Naive thymus-derived CD4-positive, alpha-beta T cell (primary cell): ENCODE measurements at regions of chr11 and their contacts with region 1.

Region 1: GRCh38 chr11:35138943-35139721 is at the start of gene CD44:
- DNase-seq: peak; percentile 65 to 87 (median 73)
- ATAC-seq: peak; percentile 90
- H3K4me3 ChIP-seq: peak within 1 kb of the TSS; percentile 97
- H3K4me3 Mint-ChIP-seq: peak within 1 kb of the TSS; percentile 90 to 100 (median 96)
- H3K27ac ChIP-seq: peak within 1 kb of the TSS; percentile 88
- H3K27ac Mint-ChIP-seq: peak within 1 kb of the TSS; percentile 79 to 100 (median 95)
- H3K4me1 ChIP-seq: peaks cover 33 to 37% of the 10 kb centered on the region in 2 donors
- H3K4me1 Mint-ChIP-seq: peaks cover 43 to 60% (median 50%) of the 10 kb centered on the region in 7 donors
- H3K27me3 ChIP-seq: no peaks in the 10 kb centered on the region
- H3K27me3 Mint-ChIP-seq: peaks cover 0 to 8% (median 0%) of the 10 kb centered on the region in 5 donors
- total RNA-seq, gene CD44: 369 to 1,223 (median 784) TPM

Region 2: DNA sequence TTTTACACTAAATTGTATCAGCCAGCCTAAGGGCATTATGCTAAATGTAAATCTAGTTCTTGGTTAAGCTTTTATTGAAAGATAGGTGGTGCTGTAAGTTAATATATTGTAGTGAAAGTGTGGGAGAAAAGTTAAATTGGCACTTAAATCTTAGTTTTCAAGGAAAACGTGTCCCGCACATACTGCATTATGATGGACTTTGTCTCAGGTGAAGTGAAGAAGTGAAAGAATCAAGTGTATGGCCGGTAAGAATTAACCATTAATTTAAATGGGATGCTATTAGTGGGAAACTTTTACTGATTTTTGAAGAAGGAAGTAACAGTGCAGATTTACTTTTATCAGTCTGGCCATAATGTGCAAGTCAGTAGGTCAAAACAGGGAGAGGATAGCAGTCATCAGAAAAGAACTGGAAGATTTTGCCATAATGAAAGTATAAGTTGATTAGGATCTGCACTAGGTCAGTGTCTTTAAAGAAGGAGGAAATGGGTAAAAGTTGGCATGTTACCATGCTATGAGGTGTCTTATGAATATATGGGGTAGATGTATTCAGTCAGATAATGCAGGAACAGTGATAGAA is 141.1 kb before region 1 on chr11:
- CTCF ChIA-PET with region 1: interaction called, 33 read pairs
- POLR2A ChIA-PET with region 1: interaction called, 8 read pairs
- intact Hi-C with region 1: loop called in 1 of 2 experiments (anchors 1 kb)
- DNase-seq: peak in 6 of 9 donors; percentile 27 to 54 (median 44)
- ATAC-seq: peak; percentile 72
- H3K4me3 ChIP-seq: no peak overlapping the region
- H3K4me3 Mint-ChIP-seq: peak overlapping the region in 9 of 10 donors; percentile 6 to 81 (median 34)
- H3K27ac ChIP-seq: peak overlapping the region; percentile 8
- H3K27ac Mint-ChIP-seq: peak overlapping the region; percentile 15 to 90 (median 69)
- H3K4me1 ChIP-seq: peaks cover 15 to 19% of the 10 kb centered on the region in 2 donors
- H3K4me1 Mint-ChIP-seq: peaks cover 19 to 38% (median 35%) of the 10 kb centered on the region in 7 donors
- H3K27me3 ChIP-seq: no peaks in the 10 kb centered on the region
- H3K27me3 Mint-ChIP-seq: no peaks in the 10 kb centered on the region

Region 3: GRCh38 chr11:35040221-35040942 is 98.8 kb before region 1 on chr11:
- CTCF ChIA-PET with region 1: interaction called, 7 read pairs
- POLR2A ChIA-PET with region 1: interaction called, 75 read pairs
- intact Hi-C with region 1: loop called (anchors 1 kb)
- DNase-seq: peak in 8 of 9 donors; percentile 53 to 89 (median 74)
- ATAC-seq: peak; percentile 88
- H3K4me3 ChIP-seq: peak overlapping the region; percentile 60
- H3K4me3 Mint-ChIP-seq: peak overlapping the region; percentile 74 to 94 (median 89)
- H3K27ac ChIP-seq: peak overlapping the region; percentile 86
- H3K27ac Mint-ChIP-seq: peak overlapping the region; percentile 90 to 99 (median 97)
- H3K4me1 ChIP-seq: peaks cover 29 to 45% of the 10 kb centered on the region in 2 donors
- H3K4me1 Mint-ChIP-seq: peaks cover 28 to 77% (median 68%) of the 10 kb centered on the region in 7 donors
- H3K27me3 ChIP-seq: no peaks in the 10 kb centered on the region
- H3K27me3 Mint-ChIP-seq: peaks cover 0 to 29% (median 0%) of the 10 kb centered on the region in 5 donors

Region 4: DNA sequence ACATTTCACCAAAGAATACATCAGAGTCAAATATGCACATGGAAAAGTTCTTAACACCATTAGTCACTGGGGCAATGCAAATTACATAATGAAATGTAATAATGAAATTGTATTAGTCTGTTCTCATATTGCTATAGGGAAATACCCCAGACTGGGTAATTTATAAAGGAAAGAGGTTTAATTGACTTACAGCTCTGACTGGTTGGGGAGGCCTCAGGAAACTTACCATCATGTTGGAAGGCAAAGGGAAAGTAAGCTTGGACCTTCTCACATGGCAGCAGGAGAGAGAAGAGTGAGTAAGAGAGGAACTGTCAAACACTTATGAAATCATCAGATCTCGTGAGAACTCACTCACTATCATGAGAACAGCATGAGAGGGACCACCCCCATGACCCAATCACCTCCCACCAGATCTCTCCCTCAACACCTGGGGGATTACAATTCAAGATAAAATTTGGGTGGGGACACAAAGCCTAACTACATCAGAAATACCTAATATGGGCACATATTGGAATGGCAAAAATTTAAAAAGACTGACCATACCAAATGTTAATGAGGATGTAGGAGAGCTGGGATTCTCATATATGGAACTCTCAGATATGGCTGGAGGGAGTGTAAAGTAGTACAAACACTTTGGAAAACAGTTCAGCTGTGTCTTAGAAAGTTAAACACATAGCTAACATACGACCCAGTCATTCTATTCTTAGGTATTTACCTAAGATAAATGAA is 65.3 kb before region 1 on chr11:
- CTCF ChIA-PET with region 1: no interaction called
- POLR2A ChIA-PET with region 1: interaction called, 23 read pairs
- intact Hi-C with region 1: loop called in 1 of 2 experiments (anchors 1 kb)
- DNase-seq: no peak
- ATAC-seq: no peak
- H3K4me3 ChIP-seq: no peak overlapping the region
- H3K4me3 Mint-ChIP-seq: no peak overlapping the region
- H3K27ac ChIP-seq: no peak overlapping the region
- H3K27ac Mint-ChIP-seq: peak overlapping the region in 7 of 9 donors; percentile 48 to 82 (median 65)
- H3K4me1 ChIP-seq: peaks cover 33 to 44% of the 10 kb centered on the region in 2 donors
- H3K4me1 Mint-ChIP-seq: peaks cover 40 to 82% (median 66%) of the 10 kb centered on the region in 7 donors
- H3K27me3 ChIP-seq: no peaks in the 10 kb centered on the region
- H3K27me3 Mint-ChIP-seq: no peaks in the 10 kb centered on the region

Region 5: DNA sequence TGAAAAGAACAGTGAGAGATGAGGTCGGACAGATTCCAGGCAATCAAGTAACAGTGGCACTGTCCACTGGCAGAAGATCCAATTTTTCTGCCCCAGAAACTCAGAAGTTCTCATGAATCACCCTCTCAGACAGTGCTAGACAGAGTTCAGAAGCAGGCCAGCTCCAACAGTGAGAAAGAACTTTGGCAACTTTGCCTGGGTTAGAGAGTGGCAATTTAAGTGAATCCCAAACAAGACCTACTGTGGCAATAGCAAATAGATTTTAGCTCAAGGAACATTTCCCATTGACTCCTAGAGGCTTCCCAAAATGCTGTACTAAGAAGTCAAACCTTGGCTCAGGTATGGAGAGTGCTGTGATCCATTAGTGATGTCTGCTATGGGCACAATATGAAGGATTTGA is 12.1 kb after region 1 on chr11:
- CTCF ChIA-PET with region 1: interaction called, 4 read pairs
- POLR2A ChIA-PET with region 1: interaction called, 22 read pairs
- intact Hi-C with region 1: loop called in 1 of 2 experiments (anchors 1 kb)
- DNase-seq: no peak
- ATAC-seq: peak; percentile 5
- H3K4me3 ChIP-seq: peak overlapping the region; percentile 8
- H3K4me3 Mint-ChIP-seq: peak overlapping the region in 9 of 10 donors; percentile 46 to 94 (median 61)
- H3K27ac ChIP-seq: peak overlapping the region; percentile 65
- H3K27ac Mint-ChIP-seq: peak overlapping the region; percentile 58 to 100 (median 89)
- H3K4me1 ChIP-seq: peaks cover 99 to 100% of the 10 kb centered on the region in 2 donors
- H3K4me1 Mint-ChIP-seq: peaks cover 74 to 100% (median 99%) of the 10 kb centered on the region in 7 donors
- H3K27me3 ChIP-seq: no peaks in the 10 kb centered on the region
- H3K27me3 Mint-ChIP-seq: no peaks in the 10 kb centered on the region

Region 6: GRCh38 chr11:35178873-35179272 is 39.7 kb after region 1 on chr11:
- CTCF ChIA-PET with region 1: interaction called, 11 read pairs
- POLR2A ChIA-PET with region 1: interaction called, 33 read pairs
- intact Hi-C with region 1: loop called (anchors 1 kb)
- DNase-seq: no peak
- ATAC-seq: no peak
- H3K4me3 ChIP-seq: no peak overlapping the region
- H3K4me3 Mint-ChIP-seq: peak overlapping the region in 9 of 10 donors; percentile 44 to 77 (median 59)
- H3K27ac ChIP-seq: peak overlapping the region; percentile 65
- H3K27ac Mint-ChIP-seq: peak overlapping the region; percentile 85 to 100 (median 94)
- H3K4me1 ChIP-seq: peaks cover 84 to 89% of the 10 kb centered on the region in 2 donors
- H3K4me1 Mint-ChIP-seq: peaks cover 62 to 93% (median 91%) of the 10 kb centered on the region in 7 donors
- H3K27me3 ChIP-seq: no peaks in the 10 kb centered on the region
- H3K27me3 Mint-ChIP-seq: no peaks in the 10 kb centered on the region

Region 7: DNA sequence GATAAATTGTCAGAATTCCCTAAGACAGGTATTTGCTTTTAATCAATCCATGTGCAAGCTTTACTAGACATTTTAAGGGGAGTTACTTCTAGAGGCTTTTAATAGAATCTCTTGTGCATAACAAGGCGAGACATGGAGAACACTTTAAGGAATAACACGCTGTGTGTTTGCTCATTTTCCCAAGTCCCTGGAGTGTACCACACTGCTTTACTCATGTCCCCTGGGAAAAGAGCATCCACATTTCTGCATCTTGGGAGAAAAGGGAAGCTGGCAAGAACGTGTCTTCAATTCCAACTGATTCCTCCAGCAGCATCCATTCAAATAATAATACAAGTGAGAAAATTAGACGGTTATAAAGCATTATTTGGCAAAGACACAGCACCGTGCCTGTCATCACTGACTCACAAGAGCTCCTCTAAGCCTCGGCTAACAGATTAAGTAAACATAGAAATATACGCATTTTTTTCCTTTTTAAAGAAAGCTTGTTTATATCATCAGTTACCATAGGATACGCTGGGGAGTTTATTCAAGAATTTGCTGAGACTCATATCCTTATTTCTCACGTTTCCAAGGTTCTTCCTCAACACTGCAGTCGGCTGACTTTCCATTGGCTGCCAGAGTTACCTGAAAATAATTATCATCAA is 121.3 kb after region 1 on chr11:
- CTCF ChIA-PET with region 1: no interaction called
- POLR2A ChIA-PET with region 1: no interaction called
- intact Hi-C with region 1: no loop called
- DNase-seq: no peak
- ATAC-seq: no peak
- H3K4me3 ChIP-seq: no peak overlapping the region
- H3K4me3 Mint-ChIP-seq: no peak overlapping the region
- H3K27ac ChIP-seq: no peak overlapping the region
- H3K27ac Mint-ChIP-seq: peak overlapping the region in 1 of 9 donors; percentile 84
- H3K4me1 ChIP-seq: peaks cover 19 to 20% of the 10 kb centered on the region in 2 donors
- H3K4me1 Mint-ChIP-seq: peaks cover 17 to 41% (median 37%) of the 10 kb centered on the region in 7 donors
- H3K27me3 ChIP-seq: no peaks in the 10 kb centered on the region
- H3K27me3 Mint-ChIP-seq: peaks cover 0 to 41% (median 0%) of the 10 kb centered on the region in 5 donors